Calu3 (cell line): ENCODE measurements at regions of chr9 and their contacts with region 1.

Region 1: DNA sequence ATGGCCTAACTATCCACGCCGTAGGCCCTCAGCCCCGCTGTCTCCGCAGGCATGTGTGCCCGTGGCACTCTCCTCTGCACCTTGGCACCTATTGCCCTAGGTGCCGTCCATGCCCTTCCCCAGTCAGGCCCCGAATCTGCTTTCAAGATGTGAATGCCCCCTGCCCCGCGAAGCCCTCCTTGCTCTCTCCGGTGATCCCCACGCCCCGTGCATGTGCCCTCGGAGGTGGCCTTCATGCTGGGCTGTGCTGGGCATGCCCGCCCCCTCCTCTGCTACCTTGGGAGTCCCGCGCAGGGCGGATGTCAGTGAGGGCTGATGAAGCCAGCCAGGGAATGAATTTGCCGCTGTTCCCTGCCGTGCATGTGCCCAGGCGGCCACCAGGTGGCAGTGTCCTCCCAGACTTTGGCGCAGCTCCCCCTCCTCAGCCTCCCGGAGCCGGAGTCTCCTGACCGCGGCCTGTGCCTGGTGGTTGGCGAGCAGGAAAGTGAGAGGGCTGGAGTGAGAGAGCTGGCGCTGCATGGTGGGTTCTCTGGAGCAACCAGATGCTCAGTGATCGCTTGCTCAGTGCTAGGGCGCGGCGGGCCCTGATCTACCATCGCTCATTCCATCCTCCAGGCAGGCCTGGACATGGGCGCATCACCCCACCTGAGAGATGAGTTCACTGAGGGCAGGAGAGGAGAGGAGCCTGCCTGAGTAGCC is 112.9 kb upstream of the LMX1B start:
- DNase-seq: peak; percentile 75
- H3K4me3 Mint-ChIP-seq: no peak overlapping the region
- H3K27ac Mint-ChIP-seq: no peak overlapping the region
- H3K4me1 Mint-ChIP-seq: no peaks in the 10 kb centered on the region
- H3K27me3 Mint-ChIP-seq: peaks cover 12% of the 10 kb centered on the region
- CTCF ChIP-seq: peak; percentile 71

Region 2: DNA sequence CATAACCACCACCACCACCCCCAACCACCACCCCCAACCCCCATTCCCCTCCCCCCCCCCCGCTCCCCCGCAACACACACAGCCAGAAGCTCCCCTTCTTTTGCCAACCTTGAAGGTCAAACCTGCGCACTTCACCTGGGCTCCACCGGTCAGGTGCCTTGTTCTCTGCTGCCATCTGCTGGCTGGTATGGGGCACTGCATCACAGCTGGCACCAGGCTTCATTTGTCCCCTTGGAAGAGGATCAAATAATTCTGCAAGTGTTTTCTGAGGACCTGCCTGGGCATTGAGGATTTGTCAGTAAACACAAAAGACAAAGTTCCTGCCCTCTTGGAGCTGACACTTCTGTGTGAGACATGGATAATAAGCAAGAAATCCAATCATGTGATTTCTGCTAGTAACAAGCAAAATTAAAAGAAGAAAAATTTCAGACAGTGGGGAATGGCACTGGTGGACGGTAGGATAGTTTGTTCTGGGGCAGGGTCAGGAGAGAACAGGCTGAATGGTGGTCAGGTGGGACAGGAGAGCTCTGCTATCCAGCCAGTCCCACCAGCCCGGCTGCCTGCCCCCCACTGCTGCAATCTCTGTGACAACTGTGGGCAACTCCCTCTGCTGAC is 57.3 kb after region 1 on chr9:
- CTCF ChIA-PET with region 1: interaction called, 8 read pairs
- intact Hi-C with region 1: loop called (anchors 2 kb)
- DNase-seq: peak; percentile 65
- H3K4me3 Mint-ChIP-seq: no peak overlapping the region
- H3K27ac Mint-ChIP-seq: no peak overlapping the region
- H3K4me1 Mint-ChIP-seq: no peaks in the 10 kb centered on the region
- H3K27me3 Mint-ChIP-seq: peaks cover 57% of the 10 kb centered on the region
- CTCF ChIP-seq: peak; percentile 75